ENCODE measurements at regions of chr21 and their contacts with region 1.

Region 1: GRCh38 chr21:46605767-46606426 is 1.0 kb upstream of the S100B start:
- DNase-seq: peak; percentile 39 to 52 (median 42)
- H3K4me3 ChIP-seq: no peak overlapping the region
- H3K4me3 Mint-ChIP-seq: peak overlapping the region in 7 of 8 donors; percentile 51 to 85 (median 73)
- H3K27ac ChIP-seq: peak overlapping the region; percentile 1
- H3K27ac Mint-ChIP-seq: peak overlapping the region in 6 of 7 donors; percentile 11 to 92 (median 83)
- H3K4me1 ChIP-seq: peaks cover 24% of the 10 kb centered on the region
- H3K4me1 Mint-ChIP-seq: peaks cover 25 to 65% (median 33%) of the 10 kb centered on the region in 4 donors
- H3K27me3 ChIP-seq: no peaks in the 10 kb centered on the region
- H3K27me3 Mint-ChIP-seq: no peaks in the 10 kb centered on the region

Region 2: DNA sequence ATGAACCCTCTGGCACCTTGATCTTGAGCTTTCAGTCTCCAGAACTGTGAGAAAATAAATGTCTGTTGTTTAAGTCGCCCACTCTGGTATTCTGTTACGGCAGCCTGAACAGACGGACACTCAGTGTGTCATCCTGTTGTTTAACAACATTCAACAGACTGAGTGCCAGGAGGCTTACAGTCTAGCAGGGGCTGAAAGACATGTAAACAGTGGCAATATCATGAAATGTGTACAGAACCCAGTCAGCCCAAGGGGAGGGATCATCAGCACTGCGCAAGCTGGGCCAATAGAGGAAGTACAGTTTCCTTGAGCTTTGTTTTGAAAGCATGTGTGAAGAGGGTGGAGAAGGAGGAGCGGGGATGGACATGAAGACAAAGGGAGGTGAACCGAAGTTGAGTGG is 133.7 kb before region 1 on chr21:
- CTCF ChIA-PET with region 1: no interaction called
- POLR2A ChIA-PET with region 1: no interaction called
- intact Hi-C with region 1: no loop called
- DNase-seq: no peak
- H3K4me3 ChIP-seq: no peak overlapping the region
- H3K4me3 Mint-ChIP-seq: no peak overlapping the region
- H3K27ac ChIP-seq: no peak overlapping the region
- H3K27ac Mint-ChIP-seq: peak overlapping the region in 6 of 7 donors; percentile 1 to 94 (median 35)
- H3K4me1 ChIP-seq: peaks cover 10% of the 10 kb centered on the region
- H3K4me1 Mint-ChIP-seq: peaks cover 40 to 55% (median 43%) of the 10 kb centered on the region in 4 donors
- H3K27me3 ChIP-seq: no peaks in the 10 kb centered on the region
- H3K27me3 Mint-ChIP-seq: no peaks in the 10 kb centered on the region

Region 3: DNA sequence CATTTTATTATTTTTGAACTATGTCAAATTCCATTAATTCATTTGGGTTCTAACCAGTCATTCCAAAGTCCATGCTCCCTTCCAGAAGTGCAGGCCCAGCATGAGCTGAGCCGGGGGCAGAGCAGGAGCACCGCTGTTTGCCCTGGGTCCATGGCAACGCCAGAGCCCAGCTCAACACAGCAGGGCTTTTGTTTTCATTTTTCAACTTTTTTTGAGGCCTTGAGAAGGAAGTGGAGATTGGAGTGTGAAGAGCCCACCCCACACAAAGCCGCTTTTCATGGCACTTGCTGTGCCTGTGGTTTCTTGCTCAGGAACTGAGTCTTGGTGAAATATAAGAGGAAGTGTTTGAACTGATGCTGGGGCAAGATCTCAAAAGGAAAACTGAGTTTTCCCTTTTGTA is 16.3 kb after region 1 on chr21:
- CTCF ChIA-PET with region 1: no interaction called
- POLR2A ChIA-PET with region 1: interaction called, 14 read pairs
- intact Hi-C with region 1: no loop called
- DNase-seq: peak; percentile 61 to 79 (median 68)
- H3K4me3 ChIP-seq: no peak overlapping the region
- H3K4me3 Mint-ChIP-seq: peak overlapping the region in 7 of 8 donors; percentile 58 to 83 (median 72)
- H3K27ac ChIP-seq: peak overlapping the region; percentile 44
- H3K27ac Mint-ChIP-seq: peak overlapping the region; percentile 87 to 97 (median 93)
- H3K4me1 ChIP-seq: peaks cover 45% of the 10 kb centered on the region
- H3K4me1 Mint-ChIP-seq: peaks cover 28 to 72% (median 45%) of the 10 kb centered on the region in 4 donors
- H3K27me3 ChIP-seq: no peaks in the 10 kb centered on the region
- H3K27me3 Mint-ChIP-seq: peaks cover 0 to 2% of the 10 kb centered on the region in 2 donors